ENCODE measurements at regions of chr12 and their contacts with region 1.

Region 1: GRCh38 chr12:101830367-101831325 is at the start of gene GNPTAB:
- DNase-seq: peak; percentile 97
- ATAC-seq: peak; percentile 96
- H3K4me3 Mint-ChIP-seq: peak within 1 kb of the TSS; percentile 100
- H3K27ac Mint-ChIP-seq: peak within 1 kb of the TSS; percentile 96
- H3K4me1 Mint-ChIP-seq: peaks cover 48% of the 10 kb centered on the region
- H3K27me3 Mint-ChIP-seq: peaks cover 2% of the 10 kb centered on the region
- total RNA-seq, gene GNPTAB: 104 to 109 TPM

Region 2: GRCh38 chr12:101767537-101767936 is 63.1 kb before region 1 on chr12:
- CTCF ChIA-PET with region 1: interaction called, 201 read pairs
- POLR2A ChIA-PET with region 1: interaction called, 3 read pairs
- DNase-seq: no peak
- ATAC-seq: no peak
- H3K4me3 Mint-ChIP-seq: no peak overlapping the region
- H3K27ac Mint-ChIP-seq: no peak overlapping the region
- H3K4me1 Mint-ChIP-seq: peaks cover 13% of the 10 kb centered on the region
- H3K27me3 Mint-ChIP-seq: no peaks in the 10 kb centered on the region

Region 3: DNA sequence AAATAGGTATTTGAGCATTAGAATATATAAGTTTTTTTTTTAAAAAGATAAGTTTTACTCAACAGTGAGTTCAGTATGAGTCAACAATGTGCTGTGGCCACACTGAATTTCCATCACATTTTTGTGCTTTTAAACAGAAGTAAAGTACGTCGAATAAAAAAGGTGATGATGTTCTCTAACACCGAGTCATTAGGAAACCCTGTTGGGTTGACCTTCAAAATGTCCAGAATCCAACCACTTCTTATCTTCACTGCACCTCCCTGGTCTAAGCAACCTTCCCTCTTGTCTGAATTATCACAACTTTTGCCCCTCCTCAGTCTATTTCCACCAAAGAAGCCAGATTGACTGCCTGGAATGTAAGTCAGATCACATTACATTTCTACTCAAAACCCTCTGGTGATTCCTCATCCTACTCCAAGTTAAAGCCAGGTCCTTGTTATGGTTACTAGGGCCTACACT is 48.3 kb before region 1 on chr12:
- CTCF ChIA-PET with region 1: interaction called, 166 read pairs
- POLR2A ChIA-PET with region 1: interaction called, 12 read pairs
- DNase-seq: no peak
- ATAC-seq: no peak
- H3K4me3 Mint-ChIP-seq: no peak overlapping the region
- H3K27ac Mint-ChIP-seq: peak overlapping the region; percentile 64
- H3K4me1 Mint-ChIP-seq: peaks cover 47% of the 10 kb centered on the region
- H3K27me3 Mint-ChIP-seq: no peaks in the 10 kb centered on the region

Region 4: GRCh38 chr12:101799774-101800173 is 30.9 kb before region 1 on chr12:
- CTCF ChIA-PET with region 1: interaction called, 263 read pairs
- POLR2A ChIA-PET with region 1: interaction called, 45 read pairs
- DNase-seq: no peak
- ATAC-seq: peak; percentile 65
- H3K4me3 Mint-ChIP-seq: peak overlapping the region; percentile 27
- H3K27ac Mint-ChIP-seq: peak overlapping the region; percentile 71
- H3K4me1 Mint-ChIP-seq: peaks cover 71% of the 10 kb centered on the region
- H3K27me3 Mint-ChIP-seq: no peaks in the 10 kb centered on the region

Region 5: GRCh38 chr12:101925361-101925760 is 94.7 kb after region 1 on chr12:
- CTCF ChIA-PET with region 1: no interaction called
- POLR2A ChIA-PET with region 1: no interaction called
- DNase-seq: no peak
- ATAC-seq: no peak
- H3K4me3 Mint-ChIP-seq: no peak overlapping the region
- H3K27ac Mint-ChIP-seq: no peak overlapping the region
- H3K4me1 Mint-ChIP-seq: no peaks in the 10 kb centered on the region
- H3K27me3 Mint-ChIP-seq: peaks cover 4% of the 10 kb centered on the region